ENCODE measurements at regions of chr5 and their contacts with region 1.

Region 1: GRCh38 chr5:58460732-58461286 is 923 bp upstream of the PLK2 start:
- DNase-seq: peak; percentile 79 to 91
- H3K4me3 ChIP-seq: peak overlapping the region; percentile 90
- H3K27ac ChIP-seq: peak overlapping the region; percentile 96
- H3K4me1 ChIP-seq: peaks cover 14% of the 10 kb centered on the region
- H3K27me3 ChIP-seq: no peaks in the 10 kb centered on the region
- CTCF ChIP-seq: peak; percentile 83

Region 2: DNA sequence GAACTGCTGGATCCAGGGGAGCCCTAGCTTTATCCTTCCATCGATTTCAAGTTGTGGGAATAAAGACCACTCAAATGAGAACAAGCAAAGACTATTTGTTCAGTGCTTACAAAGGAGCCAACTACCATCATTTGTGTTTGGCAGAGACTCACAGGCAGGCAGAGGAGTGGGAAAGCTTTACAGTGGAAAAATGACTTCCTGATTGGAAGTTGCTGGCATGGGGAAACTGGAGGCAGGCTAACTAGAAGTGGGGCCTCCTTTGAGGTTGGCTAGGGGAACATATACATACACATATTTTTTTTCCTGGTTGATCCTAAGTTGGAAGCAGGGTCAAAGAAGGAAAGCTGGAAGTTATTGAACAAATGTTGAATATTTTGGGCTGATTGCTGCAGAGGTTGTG is 1099.9 kb before region 1 on chr5:
- CTCF ChIA-PET with region 1: no interaction called
- POLR2A ChIA-PET with region 1: no interaction called
- intact Hi-C with region 1: loop called (anchors 5 kb)
- DNase-seq: no peak
- H3K4me3 ChIP-seq: no peak overlapping the region
- H3K27ac ChIP-seq: no peak overlapping the region
- H3K4me1 ChIP-seq: peaks cover 22% of the 10 kb centered on the region
- H3K27me3 ChIP-seq: no peaks in the 10 kb centered on the region
- CTCF ChIP-seq: no peak

Region 3: GRCh38 chr5:57499262-57500050 is 961.4 kb before region 1 on chr5:
- CTCF ChIA-PET with region 1: interaction called, 5 read pairs
- POLR2A ChIA-PET with region 1: interaction called, 9 read pairs
- intact Hi-C with region 1: loop called (anchors 1 kb)
- DNase-seq: peak; percentile 50 to 84
- H3K4me3 ChIP-seq: peak overlapping the region; percentile 18; the same call in 1 of the 2 replicates
- H3K27ac ChIP-seq: peak overlapping the region; percentile 74
- H3K4me1 ChIP-seq: peaks cover 34% of the 10 kb centered on the region
- H3K27me3 ChIP-seq: no peaks in the 10 kb centered on the region
- CTCF ChIP-seq: peak; percentile 84

Region 4: DNA sequence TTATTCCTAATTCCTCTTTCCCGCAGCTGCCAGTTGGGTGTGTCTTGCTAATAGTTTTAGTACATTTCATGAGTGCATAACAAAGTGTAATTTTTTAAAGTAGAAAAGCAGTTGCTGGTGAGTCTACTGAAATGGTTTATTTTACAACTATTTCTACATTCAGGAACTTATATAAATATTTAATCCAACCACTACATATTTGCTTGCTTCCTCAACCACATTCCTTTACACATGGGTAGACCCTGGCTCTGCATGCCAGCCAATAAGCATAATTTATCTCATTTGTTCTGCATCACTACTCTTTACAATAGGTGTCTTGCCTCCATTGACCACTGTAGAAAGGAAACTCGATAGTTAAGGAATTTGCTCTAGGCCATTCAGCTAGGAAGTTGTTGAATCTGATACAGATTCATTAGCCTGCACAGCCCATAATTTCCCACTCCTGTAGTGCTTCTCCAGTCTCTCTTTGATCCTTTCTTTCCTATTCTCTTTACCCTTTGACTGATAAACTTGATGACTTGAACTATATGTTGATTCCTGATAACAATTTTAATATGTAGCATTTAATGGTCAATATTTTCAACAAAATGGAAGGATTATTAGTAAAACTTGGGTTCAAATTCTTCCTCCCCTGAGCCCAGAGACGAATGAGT is 635.7 kb before region 1 on chr5:
- CTCF ChIA-PET with region 1: no interaction called
- POLR2A ChIA-PET with region 1: interaction called, 4 read pairs
- intact Hi-C with region 1: loop called (anchors 1 kb)
- DNase-seq: peak; percentile 63 to 99
- H3K4me3 ChIP-seq: no peak overlapping the region
- H3K27ac ChIP-seq: peak overlapping the region; percentile 97
- H3K4me1 ChIP-seq: peaks cover 39% of the 10 kb centered on the region
- H3K27me3 ChIP-seq: no peaks in the 10 kb centered on the region
- CTCF ChIP-seq: no peak

Region 5: GRCh38 chr5:57841676-57842363 is 619.0 kb before region 1 on chr5:
- CTCF ChIA-PET with region 1: no interaction called
- POLR2A ChIA-PET with region 1: interaction called, 17 read pairs
- intact Hi-C with region 1: loop called (anchors 1 kb)
- DNase-seq: peak; percentile 79 to 98
- H3K4me3 ChIP-seq: peak overlapping the region; percentile 24; the same call in 1 of the 2 replicates
- H3K27ac ChIP-seq: peak overlapping the region; percentile 98
- H3K4me1 ChIP-seq: peaks cover 66% of the 10 kb centered on the region
- H3K27me3 ChIP-seq: no peaks in the 10 kb centered on the region
- CTCF ChIP-seq: 0 out of 2 replicates have a peak, but pooled peaks have one; percentile 16

Region 6: DNA sequence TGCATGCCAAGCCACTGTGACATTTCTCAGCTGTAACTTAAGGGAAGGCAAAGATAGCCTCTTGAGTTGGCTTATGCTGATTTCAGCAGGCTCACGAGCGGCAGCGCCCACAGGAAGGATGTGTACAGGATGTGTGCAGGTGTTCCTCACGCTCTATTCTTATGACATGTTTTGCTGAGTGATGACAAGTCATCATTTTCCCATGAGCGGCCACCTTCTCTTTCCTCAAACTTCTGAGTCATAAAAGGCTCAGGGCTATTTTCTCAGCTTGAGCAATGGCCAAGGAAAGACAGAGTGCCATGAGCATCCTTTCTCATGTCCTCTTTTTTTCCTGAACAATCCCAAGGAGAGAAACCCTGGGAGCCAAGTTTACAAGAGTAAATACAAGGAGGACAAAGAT is 366.8 kb before region 1 on chr5:
- CTCF ChIA-PET with region 1: no interaction called
- POLR2A ChIA-PET with region 1: no interaction called
- intact Hi-C with region 1: loop called (anchors 5 kb)
- DNase-seq: peak; percentile 72 to 96
- H3K4me3 ChIP-seq: no peak overlapping the region
- H3K27ac ChIP-seq: peak overlapping the region; percentile 92
- H3K4me1 ChIP-seq: peaks cover 25% of the 10 kb centered on the region
- H3K27me3 ChIP-seq: no peaks in the 10 kb centered on the region
- CTCF ChIP-seq: no peak

Region 7: GRCh38 chr5:58366461-58366860 is 94.3 kb before region 1 on chr5:
- CTCF ChIA-PET with region 1: no interaction called
- POLR2A ChIA-PET with region 1: no interaction called
- intact Hi-C with region 1: no loop called
- DNase-seq: no peak
- H3K4me3 ChIP-seq: no peak overlapping the region
- H3K27ac ChIP-seq: no peak overlapping the region
- H3K4me1 ChIP-seq: peaks cover 16% of the 10 kb centered on the region
- H3K27me3 ChIP-seq: no peaks in the 10 kb centered on the region
- CTCF ChIP-seq: no peak

Measured in PC-9 (cell line).